ENCODE measurements at regions of chr12 and their contacts with region 1.

Region 1: GRCh38 chr12:10395390-10395998 is 5.7 kb upstream of the KLRK1 start:
- DNase-seq: peak in 3 of 5 donors; percentile 52 to 84 (median 79)
- H3K4me3 ChIP-seq: peak overlapping the region; percentile 56
- H3K4me3 Mint-ChIP-seq: peak overlapping the region; percentile 75 to 87 (median 77)
- H3K27ac ChIP-seq: peak overlapping the region; percentile 99
- H3K27ac Mint-ChIP-seq: peak overlapping the region; percentile 97 to 100 (median 98)
- H3K4me1 ChIP-seq: peaks cover 44% of the 10 kb centered on the region
- H3K4me1 Mint-ChIP-seq: peaks cover 70 to 83% (median 77%) of the 10 kb centered on the region in 3 donors
- H3K27me3 ChIP-seq: no peaks in the 10 kb centered on the region
- H3K27me3 Mint-ChIP-seq: no peaks in the 10 kb centered on the region

Region 2: DNA sequence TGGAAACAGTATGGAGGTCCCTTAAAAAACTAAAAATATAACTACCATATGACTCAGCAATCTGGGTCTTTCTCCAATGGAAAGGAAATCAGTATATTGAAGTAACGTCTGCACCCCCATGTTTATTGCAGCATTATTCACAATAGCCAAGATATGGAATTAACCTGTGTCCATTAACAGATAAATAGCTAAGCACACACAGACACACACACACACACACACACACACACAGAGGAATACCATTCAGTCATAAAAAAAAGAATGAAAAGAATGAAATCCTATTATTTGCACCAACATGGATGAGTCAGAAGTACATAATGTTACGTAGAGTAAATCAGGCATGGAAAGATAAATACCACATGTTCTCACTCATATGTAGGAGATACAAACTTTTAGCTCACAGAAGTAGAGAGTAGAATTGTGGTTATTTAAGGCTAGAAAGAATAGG is 10.3 kb before region 1 on chr12:
- CTCF ChIA-PET with region 1: interaction called, 6 read pairs
- POLR2A ChIA-PET with region 1: interaction called, 30 read pairs
- DNase-seq: no peak
- H3K4me3 ChIP-seq: peak overlapping the region; percentile 35
- H3K4me3 Mint-ChIP-seq: peak overlapping the region; percentile 82 to 98 (median 92)
- H3K27ac ChIP-seq: peak overlapping the region; percentile 2
- H3K27ac Mint-ChIP-seq: peak overlapping the region; percentile 60 to 99 (median 87)
- H3K4me1 ChIP-seq: peaks cover 9% of the 10 kb centered on the region
- H3K4me1 Mint-ChIP-seq: peaks cover 49 to 68% (median 50%) of the 10 kb centered on the region in 3 donors
- H3K27me3 ChIP-seq: no peaks in the 10 kb centered on the region
- H3K27me3 Mint-ChIP-seq: peaks cover 0 to 1% of the 10 kb centered on the region in 2 donors

Region 3: GRCh38 chr12:10409387-10409786 is 13.9 kb after region 1 on chr12 and contains the start of gene KLRC4:
- CTCF ChIA-PET with region 1: interaction called, 16 read pairs
- POLR2A ChIA-PET with region 1: interaction called, 6 read pairs
- DNase-seq: peak in 2 of 5 donors; percentile 55 to 68
- H3K4me3 ChIP-seq: peak within 1 kb of the TSS; percentile 47
- H3K4me3 Mint-ChIP-seq: peak within 1 kb of the TSS; percentile 86 to 98 (median 88)
- H3K27ac ChIP-seq: peak within 1 kb of the TSS; percentile 64
- H3K27ac Mint-ChIP-seq: peak within 1 kb of the TSS; percentile 5 to 94 (median 81)
- H3K4me1 ChIP-seq: no peaks in the 10 kb centered on the region
- H3K4me1 Mint-ChIP-seq: peaks cover 13 to 31% (median 25%) of the 10 kb centered on the region in 3 donors
- H3K27me3 ChIP-seq: no peaks in the 10 kb centered on the region
- H3K27me3 Mint-ChIP-seq: no peaks in the 10 kb centered on the region
- total RNA-seq, gene KLRC4: 10.7 to 16.2 TPM

Region 4: DNA sequence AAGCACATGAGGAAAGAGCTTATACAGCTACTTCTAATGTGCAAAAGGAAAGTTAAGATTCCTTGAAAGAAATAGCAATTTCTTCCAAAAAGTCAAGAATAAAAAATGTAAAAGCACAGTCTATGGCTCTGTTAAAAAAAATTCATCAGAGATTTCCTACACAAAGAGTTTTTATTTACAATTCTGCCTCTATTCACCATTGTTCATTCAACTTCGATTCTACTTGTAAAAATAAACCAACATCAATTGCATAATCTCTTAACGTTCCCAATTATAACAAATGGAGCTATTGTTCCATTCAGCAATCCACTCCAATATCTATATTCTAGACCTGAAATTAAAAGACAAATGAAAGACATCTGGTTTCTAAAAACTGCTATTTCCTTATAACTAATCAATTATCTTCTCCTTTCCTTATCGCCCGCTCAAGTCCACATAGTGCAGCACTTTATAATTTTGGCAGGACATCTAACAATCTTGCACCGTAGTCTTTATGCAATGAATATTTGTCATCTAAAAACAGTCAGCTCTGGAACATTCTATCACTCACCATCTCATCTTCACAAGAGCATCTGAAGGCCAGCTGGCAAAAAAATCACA is 116.4 kb after region 1 on chr12:
- CTCF ChIA-PET with region 1: no interaction called
- POLR2A ChIA-PET with region 1: no interaction called
- DNase-seq: no peak
- H3K4me3 ChIP-seq: no peak overlapping the region
- H3K4me3 Mint-ChIP-seq: no peak overlapping the region
- H3K27ac ChIP-seq: no peak overlapping the region
- H3K27ac Mint-ChIP-seq: no peak overlapping the region
- H3K4me1 ChIP-seq: no peaks in the 10 kb centered on the region
- H3K4me1 Mint-ChIP-seq: no peaks in the 10 kb centered on the region
- H3K27me3 ChIP-seq: no peaks in the 10 kb centered on the region
- H3K27me3 Mint-ChIP-seq: peaks cover 0 to 3% of the 10 kb centered on the region in 2 donors

Measured in CD8-positive, alpha-beta memory T cell (primary cell).